Heart left ventricle (tissue), 16 donors: ENCODE measurements at regions of chr6 and their contacts with region 1.

Region 1: GRCh38 chr6:137415127-137415833 is 78.9 kb downstream of the OLIG3 start:
- DNase-seq: peak in 4 of 5 donors; percentile 36 to 51 (median 39)
- ATAC-seq: peak; percentile 75 to 93 (median 90)
- H3K4me3 ChIP-seq: peak overlapping the region in 11 of 12 donors; percentile 7 to 58 (median 47)
- H3K27ac ChIP-seq: peak overlapping the region in 9 of 12 donors; percentile 19 to 76 (median 47)
- H3K4me1 ChIP-seq: peaks cover 0 to 17% (median 2%) of the 10 kb centered on the region in 12 donors
- H3K27me3 ChIP-seq: peaks cover 0 to 29% (median 4%) of the 10 kb centered on the region in 9 donors
- CTCF ChIP-seq: peak; percentile 40 to 72 (median 60)
- POLR2A ChIP-seq: no peak

Region 2: DNA sequence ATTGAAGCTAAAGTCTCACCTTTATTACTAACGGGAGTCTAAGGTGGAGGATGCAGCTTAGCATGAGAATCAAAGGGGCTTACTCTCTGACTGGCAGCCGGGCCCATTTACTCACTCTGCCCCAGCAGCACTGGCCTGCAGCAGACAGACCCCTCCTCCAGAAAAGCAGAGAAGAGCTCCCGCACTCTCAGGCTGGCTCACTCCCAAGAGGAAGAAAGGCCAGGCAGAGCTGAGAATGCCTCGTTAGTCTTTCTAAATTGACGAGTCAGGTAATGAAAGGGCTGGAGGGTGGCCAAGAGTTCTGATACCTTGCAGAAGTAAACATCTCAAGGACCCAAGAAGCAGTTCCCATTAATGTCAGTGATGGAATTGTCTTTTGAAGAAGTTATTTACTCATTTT is 326.0 kb before region 1 on chr6:
- intact Hi-C with region 1: loop called in 7 of 10 experiments (anchors 5 to 10 kb)
- DNase-seq: no peak
- ATAC-seq: no peak
- H3K4me3 ChIP-seq: no peak overlapping the region
- H3K27ac ChIP-seq: no peak overlapping the region
- H3K4me1 ChIP-seq: peaks cover 0 to 2% (median 0%) of the 10 kb centered on the region in 12 donors
- H3K27me3 ChIP-seq: no peaks in the 10 kb centered on the region
- CTCF ChIP-seq: no peak
- POLR2A ChIP-seq: no peak

Region 3: GRCh38 chr6:137271245-137272183 is 143.8 kb before region 1 on chr6:
- intact Hi-C with region 1: loop called in 8 of 10 experiments (anchors 2 to 10 kb)
- DNase-seq: no peak
- ATAC-seq: peak in 3 of 4 donors; percentile 57 to 85 (median 73)
- H3K4me3 ChIP-seq: no peak overlapping the region
- H3K27ac ChIP-seq: no peak overlapping the region
- H3K4me1 ChIP-seq: peaks cover 0 to 14% (median 0%) of the 10 kb centered on the region in 12 donors
- H3K27me3 ChIP-seq: no peaks in the 10 kb centered on the region
- CTCF ChIP-seq: peak; percentile 78 to 96 (median 92)
- POLR2A ChIP-seq: no peak

Region 4: GRCh38 chr6:137283940-137284810 is 131.1 kb before region 1 on chr6:
- intact Hi-C with region 1: loop called in 4 of 10 experiments (anchors 5 to 10 kb)
- DNase-seq: no peak
- ATAC-seq: no peak
- H3K4me3 ChIP-seq: no peak overlapping the region
- H3K27ac ChIP-seq: no peak overlapping the region
- H3K4me1 ChIP-seq: peaks cover 0 to 3% (median 0%) of the 10 kb centered on the region in 12 donors
- H3K27me3 ChIP-seq: no peaks in the 10 kb centered on the region
- CTCF ChIP-seq: no peak
- POLR2A ChIP-seq: no peak

Region 5: DNA sequence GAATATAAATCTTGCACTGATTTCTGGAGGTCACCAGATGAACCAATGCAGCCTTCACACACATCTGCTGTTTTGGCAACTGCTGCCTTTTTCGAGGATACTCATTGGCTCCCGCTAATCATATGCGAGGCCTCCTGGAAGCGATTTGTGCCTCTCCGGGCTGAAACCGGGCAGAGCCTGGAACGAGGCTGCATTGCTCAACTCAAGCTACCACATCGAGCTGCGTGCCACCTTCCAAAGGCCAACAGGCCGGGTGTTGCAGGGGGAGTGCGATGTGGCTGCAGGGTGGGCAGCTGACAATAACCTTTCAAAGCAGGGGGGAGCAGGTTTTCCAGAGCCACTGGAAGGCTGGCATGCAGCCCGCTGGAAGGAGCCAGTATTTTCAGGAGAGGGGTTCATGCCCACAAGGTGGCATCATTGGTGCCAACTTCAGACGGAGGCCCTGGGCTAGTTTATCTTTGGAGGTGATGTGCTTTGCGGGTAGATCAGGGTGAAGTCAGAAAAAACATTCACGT is 73.5 kb before region 1 on chr6:
- intact Hi-C with region 1: loop called in 2 of 10 experiments (anchors 5 to 10 kb)
- DNase-seq: peak in 2 of 5 donors; percentile 24 to 60
- ATAC-seq: peak in 2 of 4 donors; percentile 52 to 65
- H3K4me3 ChIP-seq: peak overlapping the region in 1 of 12 donors; percentile 42
- H3K27ac ChIP-seq: no peak overlapping the region
- H3K4me1 ChIP-seq: peaks cover 0 to 17% (median 4%) of the 10 kb centered on the region in 12 donors
- H3K27me3 ChIP-seq: no peaks in the 10 kb centered on the region
- CTCF ChIP-seq: peak in 3 of 12 donors; percentile 9 to 33 (median 9)
- POLR2A ChIP-seq: no peak

Region 6: DNA sequence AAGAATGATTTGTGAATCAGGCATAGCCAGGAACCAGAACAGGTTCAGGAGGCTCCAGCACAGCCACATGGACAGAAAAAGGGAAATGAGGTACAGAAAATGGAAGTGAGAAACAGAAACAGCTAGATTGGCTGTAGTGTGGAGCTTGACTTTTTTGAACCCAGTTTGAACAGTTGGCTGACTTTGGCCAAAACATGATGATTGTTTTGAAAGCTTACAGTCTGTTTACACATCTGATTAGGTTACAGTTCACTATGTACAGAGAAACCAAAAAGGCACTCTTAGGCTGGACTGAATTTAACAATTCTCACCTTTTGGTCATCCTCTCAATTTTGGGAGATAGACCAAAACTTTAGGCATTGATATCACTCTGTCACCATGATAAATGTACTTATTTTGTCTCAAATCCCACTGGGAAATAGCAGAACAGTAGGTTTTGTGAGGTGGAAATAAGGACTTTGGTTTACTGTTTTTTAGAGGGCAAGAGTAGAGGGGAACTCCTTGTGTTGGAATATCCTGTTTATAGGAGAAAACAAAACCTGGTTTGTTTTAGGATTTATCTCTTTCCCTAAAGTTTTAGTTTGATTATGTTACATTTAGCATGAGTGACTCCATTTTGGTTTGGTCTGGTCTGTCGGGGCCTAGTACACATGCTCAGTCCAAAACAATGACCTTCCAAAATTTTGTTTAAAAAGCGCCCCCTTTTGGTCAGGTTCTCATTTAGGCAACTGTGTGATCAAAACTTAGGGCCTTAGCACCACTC is 44.2 kb before region 1 on chr6:
- intact Hi-C with region 1: no loop called
- DNase-seq: no peak
- ATAC-seq: no peak
- H3K4me3 ChIP-seq: no peak overlapping the region
- H3K27ac ChIP-seq: no peak overlapping the region
- H3K4me1 ChIP-seq: no peaks in the 10 kb centered on the region
- H3K27me3 ChIP-seq: no peaks in the 10 kb centered on the region
- CTCF ChIP-seq: no peak
- POLR2A ChIP-seq: no peak

Region 7: DNA sequence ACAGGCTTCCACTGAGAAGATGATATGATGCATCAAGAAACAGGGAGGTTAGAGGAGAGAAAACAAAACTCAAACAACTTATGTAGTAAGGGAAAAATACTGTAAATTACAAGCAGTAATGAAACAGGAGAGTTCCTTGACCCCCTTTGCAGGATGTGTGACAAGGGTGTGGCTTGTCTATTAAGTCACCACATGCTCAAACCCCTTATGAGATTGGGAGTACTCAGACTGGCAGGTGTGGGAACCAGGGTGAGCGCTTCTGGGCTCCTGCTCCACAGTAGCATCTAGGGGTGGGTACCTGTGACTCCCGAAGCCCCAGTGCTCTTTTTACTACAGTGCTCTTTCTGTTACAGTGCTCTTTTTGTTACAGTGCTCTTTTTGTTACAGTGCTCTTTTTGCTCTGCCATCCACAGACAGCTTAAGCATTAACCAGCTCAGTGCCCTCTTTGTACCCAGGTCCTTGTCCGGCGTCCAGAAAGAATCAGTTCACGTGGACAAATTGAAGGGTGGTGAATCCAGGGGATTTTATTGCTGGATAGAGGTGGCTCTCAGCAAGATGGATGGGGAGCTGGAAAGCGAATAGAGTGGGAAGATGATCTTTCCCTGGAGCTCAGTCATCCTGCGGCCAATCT is 50.2 kb after region 1 on chr6:
- intact Hi-C with region 1: no loop called
- DNase-seq: no peak
- ATAC-seq: no peak
- H3K4me3 ChIP-seq: no peak overlapping the region
- H3K27ac ChIP-seq: no peak overlapping the region
- H3K4me1 ChIP-seq: no peaks in the 10 kb centered on the region
- H3K27me3 ChIP-seq: peaks cover 0 to 15% (median 0%) of the 10 kb centered on the region in 9 donors
- CTCF ChIP-seq: no peak
- POLR2A ChIP-seq: no peak